Aorta (tissue), 5 donors: ENCODE measurements at regions of chr20 and their contacts with region 1.

Region 1: DNA sequence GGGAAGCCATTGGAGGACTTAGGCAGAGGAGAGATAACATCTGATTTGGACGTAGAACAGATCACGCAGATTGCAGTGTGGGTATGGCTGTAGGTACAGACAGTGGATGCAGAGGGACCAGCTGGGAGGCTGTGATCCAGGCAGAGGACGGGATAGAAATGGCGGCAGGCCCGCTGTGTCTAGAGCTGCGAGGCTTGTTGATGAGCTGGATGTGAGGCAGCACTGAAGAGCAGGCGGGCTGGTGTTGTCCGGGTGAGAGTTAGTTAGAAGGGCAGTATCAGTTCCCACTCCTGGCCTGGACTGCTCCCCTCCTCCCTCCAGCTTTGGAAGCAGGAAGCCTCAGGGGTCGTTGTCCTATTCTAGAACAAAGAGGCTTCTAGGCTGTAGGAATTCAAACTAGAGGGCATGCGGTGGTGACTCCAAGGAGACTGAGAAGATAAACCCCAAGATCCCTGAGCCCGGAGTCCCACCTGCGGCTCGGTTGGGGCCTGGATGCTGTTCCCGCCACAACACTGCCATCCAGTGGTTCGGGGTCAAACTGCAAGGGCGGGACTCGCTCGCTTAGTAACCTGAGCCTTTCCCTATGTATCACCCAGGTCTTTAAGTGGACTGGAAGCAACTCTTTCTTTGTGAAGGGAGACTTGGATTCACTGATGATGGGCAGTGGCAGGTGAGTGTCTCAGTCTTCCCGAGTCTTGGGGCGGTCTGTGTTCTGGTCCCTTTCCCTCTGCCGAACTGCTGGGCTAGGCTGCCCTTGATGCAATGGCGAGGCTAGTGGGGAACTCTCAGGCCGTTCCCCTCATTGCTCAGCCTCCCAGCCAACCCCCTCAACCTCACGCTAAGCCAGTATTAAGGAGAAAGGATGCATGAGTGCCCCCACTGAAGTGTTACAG is 11.2 kb downstream of the TLDC2 start:
- DNase-seq: peak; percentile 88 to 95
- ATAC-seq: peak; percentile 90
- H3K4me3 ChIP-seq: no peak overlapping the region
- H3K27ac ChIP-seq: no peak overlapping the region
- H3K4me1 ChIP-seq: no peaks in the 10 kb centered on the region
- H3K27me3 ChIP-seq: no peaks in the 10 kb centered on the region

Region 2: DNA sequence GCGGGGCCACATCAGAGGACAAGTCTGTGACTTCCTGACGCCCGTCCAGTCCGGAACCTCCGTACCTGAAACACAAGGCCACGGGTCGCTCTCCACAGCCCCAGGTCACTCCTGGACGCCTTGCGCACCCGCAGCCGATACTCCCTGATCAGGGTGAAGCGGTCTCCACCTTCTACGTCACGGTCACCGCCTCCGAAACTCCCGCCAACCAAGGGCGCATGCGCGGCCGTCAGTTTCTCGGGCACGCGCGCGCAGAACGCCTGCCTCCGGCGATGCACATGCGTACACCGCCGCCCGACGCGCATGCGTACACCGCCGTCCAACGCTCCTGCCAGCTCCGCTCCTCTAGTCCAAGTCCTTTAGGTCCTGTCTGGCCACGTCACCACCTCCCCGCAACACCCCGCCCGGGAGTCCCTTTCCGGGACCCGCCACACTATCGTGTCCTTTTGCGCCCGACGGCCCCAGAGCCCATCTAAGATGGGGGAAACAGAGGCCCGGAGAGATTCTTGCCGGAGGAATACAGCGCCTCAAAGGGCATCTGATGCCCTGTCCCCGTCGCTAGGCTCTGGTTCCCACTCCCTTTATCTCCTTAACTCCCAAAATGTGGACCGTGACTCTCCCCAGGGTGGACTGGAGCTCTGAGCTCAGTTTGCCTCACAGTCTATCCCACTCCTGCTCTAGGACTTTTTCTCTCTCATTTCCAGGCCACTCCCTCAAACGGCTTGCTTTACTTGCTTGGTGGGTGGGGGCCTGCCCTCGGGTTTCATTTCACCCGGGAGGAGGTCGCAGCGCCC is 113.3 kb before region 1 on chr20 and contains the start of gene DSN1:
- intact Hi-C with region 1: no loop called
- DNase-seq: peak; percentile 99
- ATAC-seq: peak; percentile 97
- H3K4me3 ChIP-seq: peak within 1 kb of the TSS; percentile 49 to 68
- H3K27ac ChIP-seq: peak within 1 kb of the TSS; percentile 64 to 81
- H3K4me1 ChIP-seq: no peaks in the 10 kb centered on the region
- H3K27me3 ChIP-seq: no peaks in the 10 kb centered on the region
- total RNA-seq, gene DSN1: 7.1 to 7.7 TPM

Region 3: GRCh38 chr20:36792422-36792821 is 94.7 kb before region 1 on chr20:
- intact Hi-C with region 1: loop called (anchors 5 kb)
- DNase-seq: peak; percentile 73 to 83
- ATAC-seq: peak; percentile 74
- H3K4me3 ChIP-seq: no peak overlapping the region
- H3K27ac ChIP-seq: no peak overlapping the region
- H3K4me1 ChIP-seq: no peaks in the 10 kb centered on the region
- H3K27me3 ChIP-seq: no peaks in the 10 kb centered on the region

Region 4: GRCh38 chr20:36827474-36827873 is 59.6 kb before region 1 on chr20:
- intact Hi-C with region 1: no loop called
- DNase-seq: no peak
- ATAC-seq: no peak
- H3K4me3 ChIP-seq: no peak overlapping the region
- H3K27ac ChIP-seq: no peak overlapping the region
- H3K4me1 ChIP-seq: peaks cover 3 to 6% of the 10 kb centered on the region in 2 donors
- H3K27me3 ChIP-seq: no peaks in the 10 kb centered on the region